ENCODE measurements at regions of chr14 and their contacts with region 1.

Region 1: DNA sequence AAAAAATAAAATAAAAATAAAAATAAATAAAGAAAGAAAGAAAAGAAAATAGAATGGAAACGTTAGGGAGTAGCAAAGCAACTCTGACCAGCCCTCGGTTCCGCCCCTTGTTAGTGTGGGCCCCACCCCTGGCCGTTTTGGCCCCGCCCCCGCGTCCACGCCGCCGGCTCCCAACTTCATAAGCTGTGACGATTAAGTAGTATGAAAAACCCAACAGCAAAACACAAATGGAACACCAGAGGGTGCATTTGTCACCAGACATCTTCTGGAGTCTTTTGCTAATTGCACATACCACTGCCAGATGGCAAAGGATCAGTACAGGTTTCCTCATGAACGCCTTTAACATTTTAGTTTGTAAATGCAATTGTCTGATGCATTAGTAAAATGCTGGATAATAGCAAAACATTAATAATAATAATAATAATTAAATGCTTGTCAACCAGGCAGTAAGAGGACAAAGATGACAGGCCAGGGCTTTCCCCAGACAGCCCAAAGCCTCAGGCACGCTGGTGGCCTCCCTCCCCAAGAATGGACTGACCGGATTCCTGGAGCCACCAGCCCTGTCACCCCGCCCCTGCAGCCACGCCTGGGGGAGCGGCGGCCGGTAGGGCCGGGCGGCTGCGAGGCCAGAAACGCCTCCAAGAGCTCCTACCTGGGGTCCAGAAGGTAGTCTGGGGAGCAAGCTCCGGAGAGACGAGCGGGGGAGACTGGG is 23.6 kb downstream of the HSP90AA1 start:
- DNase-seq: peak; percentile 68
- ATAC-seq: peak; percentile 82
- H3K4me3 Mint-ChIP-seq: no peak overlapping the region; the same call in 1 of the 2 replicates
- H3K27ac Mint-ChIP-seq: no peak overlapping the region
- H3K4me1 Mint-ChIP-seq: peaks cover 11% of the 10 kb centered on the region
- H3K27me3 Mint-ChIP-seq: no peaks in the 10 kb centered on the region; the same call in 1 of the 2 replicates
- CTCF ChIP-seq: no peak

Region 2: DNA sequence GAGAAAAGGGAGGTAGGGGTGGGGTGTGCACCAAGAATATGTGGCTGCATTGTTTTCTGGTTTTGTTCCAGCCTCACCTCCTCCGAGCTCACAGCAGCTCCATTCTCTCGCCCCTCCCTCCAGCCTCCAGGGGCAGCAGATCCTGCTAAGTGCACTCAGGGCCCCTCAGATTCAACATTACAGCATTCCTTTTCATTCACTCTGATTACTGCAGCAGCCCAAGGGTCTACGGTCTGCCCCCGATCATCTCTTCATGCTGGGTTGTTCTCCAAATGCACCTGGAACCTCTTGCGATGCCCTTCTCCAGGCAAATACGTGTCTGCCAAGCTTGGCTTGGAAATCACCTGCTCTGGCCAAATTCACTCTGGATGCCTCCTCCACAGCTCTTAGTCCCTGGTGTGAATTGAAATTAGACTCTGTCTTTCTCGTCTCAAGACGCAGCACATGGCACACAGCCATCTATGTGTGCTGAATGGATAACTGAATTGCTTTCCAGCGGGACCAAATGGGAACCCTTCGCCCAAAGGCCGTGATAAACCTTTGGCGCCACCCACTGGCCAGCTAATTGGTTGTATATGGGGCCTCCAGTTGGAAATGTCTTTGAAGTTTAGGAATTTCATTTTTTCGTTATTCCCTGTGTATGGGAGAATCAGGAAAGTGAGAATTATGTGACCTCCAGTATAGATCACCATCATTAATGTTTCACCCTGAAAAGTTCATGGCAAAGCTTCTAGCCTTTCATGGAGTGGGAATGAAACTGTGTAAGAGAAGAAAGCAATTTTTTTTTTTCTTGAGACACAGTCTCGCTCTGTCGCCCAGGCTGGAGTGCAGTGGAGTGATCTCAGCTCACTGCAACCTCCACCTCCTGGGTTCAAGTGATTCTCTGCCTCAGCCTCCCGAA is 33.2 kb after region 1 on chr14:
- CTCF ChIA-PET with region 1: interaction called, 16 read pairs
- POLR2A ChIA-PET with region 1: no interaction called
- DNase-seq: peak; percentile 87
- ATAC-seq: peak; percentile 70
- H3K4me3 Mint-ChIP-seq: 0 out of 2 replicates have a peak overlapping the region, but pooled peaks have one; percentile 2
- H3K27ac Mint-ChIP-seq: peak overlapping the region; percentile 39; the same call in 1 of the 2 replicates
- H3K4me1 Mint-ChIP-seq: peaks cover 27% of the 10 kb centered on the region
- H3K27me3 Mint-ChIP-seq: no peaks in the 10 kb centered on the region; the same call in 1 of the 2 replicates
- CTCF ChIP-seq: peak; percentile 55; the same call in 1 of the 2 replicates